Endothelial cell of umbilical vein (primary cell): ENCODE measurements at regions of chr13 and their contacts with region 1.

Region 1: GRCh38 chr13:95614641-95615245 is 29.8 kb downstream of the DZIP1 start:
- DNase-seq: no peak
- H3K4me3 ChIP-seq: no peak overlapping the region
- H3K27ac ChIP-seq: no peak overlapping the region
- H3K4me1 ChIP-seq: no peaks in the 10 kb centered on the region
- H3K27me3 ChIP-seq: no peaks in the 10 kb centered on the region
- CTCF ChIP-seq: no peak
- POLR2A ChIP-seq: no peak

Region 2: DNA sequence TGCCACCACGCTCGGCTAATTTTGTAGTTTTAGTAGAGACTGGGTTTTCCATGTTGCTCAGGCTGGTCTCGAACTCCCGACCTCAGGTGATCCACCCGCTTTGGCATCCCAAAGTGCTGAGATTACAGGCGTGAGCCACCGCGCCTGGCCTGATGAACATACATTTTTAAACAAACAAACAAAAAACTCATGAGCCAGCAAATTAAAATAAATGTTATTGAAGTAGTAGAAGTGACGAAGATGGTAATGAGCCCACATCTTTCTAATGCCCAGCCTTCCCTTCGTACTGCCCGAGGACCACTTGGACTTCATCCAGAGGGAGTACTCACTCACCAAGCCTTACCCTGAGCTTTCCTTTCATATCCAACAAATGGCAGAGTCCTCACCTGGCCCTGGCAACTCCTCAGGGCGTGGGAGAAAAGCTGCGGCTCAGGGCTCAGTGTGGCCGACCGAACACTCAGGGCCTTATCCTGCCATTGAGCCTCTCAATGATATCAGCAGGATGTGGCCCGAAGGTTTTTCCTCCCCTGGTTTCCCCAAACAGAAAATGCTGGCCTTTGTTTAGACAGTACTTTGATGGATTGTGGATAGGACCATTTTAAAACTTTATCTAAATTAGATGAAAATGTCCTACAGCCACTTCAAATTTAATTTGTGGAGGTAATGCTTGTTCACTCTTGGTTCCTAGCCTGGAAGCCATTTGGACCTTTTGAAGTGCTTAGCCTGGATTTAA is 290.6 kb before region 1 on chr13:
- CTCF ChIA-PET with region 1: no interaction called
- POLR2A ChIA-PET with region 1: no interaction called
- dilution Hi-C with region 1: no loop called
- intact Hi-C with region 1: no loop called
- DNase-seq: peak; percentile 87
- H3K4me3 ChIP-seq: no peak overlapping the region
- H3K27ac ChIP-seq: no peak overlapping the region
- H3K4me1 ChIP-seq: peaks cover 17% of the 10 kb centered on the region
- H3K27me3 ChIP-seq: no peaks in the 10 kb centered on the region
- CTCF ChIP-seq: no peak
- POLR2A ChIP-seq: no peak

Region 3: GRCh38 chr13:95596701-95597100 is 18.0 kb before region 1 on chr13:
- CTCF ChIA-PET with region 1: interaction called, 4 read pairs
- POLR2A ChIA-PET with region 1: no interaction called
- dilution Hi-C with region 1: no loop called
- intact Hi-C with region 1: loop called (anchors 2 kb)
- DNase-seq: no peak
- H3K4me3 ChIP-seq: no peak overlapping the region
- H3K27ac ChIP-seq: no peak overlapping the region
- H3K4me1 ChIP-seq: peaks cover 8% of the 10 kb centered on the region
- H3K27me3 ChIP-seq: no peaks in the 10 kb centered on the region
- CTCF ChIP-seq: no peak
- POLR2A ChIP-seq: no peak

Region 4: DNA sequence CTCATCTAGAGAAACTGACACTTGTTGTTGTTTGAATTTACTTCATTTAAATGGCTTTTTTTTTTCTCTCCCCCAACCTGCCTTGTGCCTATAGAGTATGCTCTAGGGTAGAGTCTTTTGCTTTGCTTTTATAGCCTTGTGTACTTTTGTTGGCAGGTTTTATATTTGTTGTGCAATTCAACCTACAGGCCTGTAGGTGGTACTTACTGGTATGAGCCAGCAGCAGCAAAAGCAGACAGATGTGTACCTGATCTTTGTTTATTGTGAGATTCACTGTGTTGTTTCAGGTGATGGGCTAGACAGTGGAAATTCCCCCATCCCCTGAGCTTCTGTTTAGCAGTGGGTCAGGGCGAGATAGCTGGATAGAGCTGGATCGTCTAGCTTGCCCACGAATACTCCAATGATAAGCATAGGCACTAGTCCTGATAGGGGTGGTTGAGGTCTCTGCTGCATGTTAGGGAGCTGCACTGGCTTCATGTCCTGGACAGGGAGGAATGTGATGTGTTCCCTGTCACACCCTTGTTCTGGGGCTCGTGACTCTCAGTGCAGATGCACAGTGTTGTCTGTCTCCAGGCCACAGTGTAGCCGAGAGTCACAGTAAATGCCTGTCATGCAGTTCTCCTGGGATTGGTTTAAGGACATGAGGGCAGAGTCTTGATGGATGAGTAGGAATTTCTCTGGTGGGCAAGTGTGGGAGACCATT is 83.5 kb after region 1 on chr13:
- CTCF ChIA-PET with region 1: no interaction called
- POLR2A ChIA-PET with region 1: no interaction called
- dilution Hi-C with region 1: no loop called
- intact Hi-C with region 1: no loop called
- DNase-seq: no peak
- H3K4me3 ChIP-seq: no peak overlapping the region
- H3K27ac ChIP-seq: no peak overlapping the region
- H3K4me1 ChIP-seq: no peaks in the 10 kb centered on the region
- H3K27me3 ChIP-seq: no peaks in the 10 kb centered on the region
- CTCF ChIP-seq: peak in 1 of 2 donors; percentile 8
- POLR2A ChIP-seq: no peak